ENCODE measurements at regions of chr4 and their contacts with region 1.

Region 1: GRCh38 chr4:101169044-101170014 is 178.0 kb downstream of the PPP3CA start:
- DNase-seq: peak; percentile 29
- H3K4me3 ChIP-seq: peak overlapping the region in 1 of 2 experiments; percentile 44; a peak in 1 of 4 replicates
- H3K27ac ChIP-seq: no peak overlapping the region
- H3K4me1 ChIP-seq: peaks cover 5 to 22% of the 10 kb centered on the region in 2 experiments; a peak in 3 of 4 replicates
- H3K27me3 ChIP-seq: no peaks in the 10 kb centered on the region
- CTCF ChIP-seq: peak; percentile 72
- EP300 ChIP-seq: no peak
- RAD21 ChIP-seq: peak; percentile 94

Region 2: DNA sequence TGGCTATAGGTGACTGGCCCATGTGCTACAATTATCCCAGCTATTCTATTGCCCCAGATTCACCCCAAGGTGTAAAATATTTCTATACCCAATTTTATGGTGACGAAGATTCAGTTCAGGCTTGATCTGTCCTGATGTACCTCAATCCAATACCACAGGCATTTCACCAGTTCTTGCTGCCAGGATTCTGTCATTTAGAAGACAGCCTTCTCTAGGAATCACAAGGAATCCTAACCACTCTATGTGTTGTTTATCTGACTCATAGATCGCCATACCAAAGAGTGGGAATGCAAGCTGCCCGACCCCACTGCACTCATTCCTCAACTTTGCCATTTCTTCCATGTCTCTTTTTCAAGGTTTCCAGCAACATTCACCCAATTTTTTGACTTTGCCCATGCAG is 296.5 kb before region 1 on chr4:
- CTCF ChIA-PET with region 1: no interaction called
- POLR2A ChIA-PET with region 1: no interaction called
- DNase-seq: no peak
- H3K4me3 ChIP-seq: no peak overlapping the region
- H3K27ac ChIP-seq: no peak overlapping the region
- H3K4me1 ChIP-seq: no peaks in the 10 kb centered on the region; a peak in 1 of 4 replicates
- H3K27me3 ChIP-seq: no peaks in the 10 kb centered on the region
- CTCF ChIP-seq: no peak
- EP300 ChIP-seq: no peak
- RAD21 ChIP-seq: no peak

Region 3: GRCh38 chr4:101037938-101038413 is 131.4 kb before region 1 on chr4:
- CTCF ChIA-PET with region 1: no interaction called
- POLR2A ChIA-PET with region 1: no interaction called
- DNase-seq: no peak
- H3K4me3 ChIP-seq: no peak overlapping the region
- H3K27ac ChIP-seq: no peak overlapping the region; a peak in 1 of 4 replicates
- H3K4me1 ChIP-seq: peaks cover 0 to 5% of the 10 kb centered on the region in 2 experiments; a peak in 2 of 4 replicates
- H3K27me3 ChIP-seq: no peaks in the 10 kb centered on the region
- CTCF ChIP-seq: no peak
- EP300 ChIP-seq: no peak
- RAD21 ChIP-seq: no peak

Region 4: GRCh38 chr4:101730291-101731117 is 561.2 kb after region 1 on chr4:
- CTCF ChIA-PET with region 1: interaction called, 25 read pairs
- POLR2A ChIA-PET with region 1: no interaction called
- DNase-seq: peak; percentile 50
- H3K4me3 ChIP-seq: no peak overlapping the region; a peak in 1 of 4 replicates
- H3K27ac ChIP-seq: no peak overlapping the region
- H3K4me1 ChIP-seq: no peaks in the 10 kb centered on the region
- H3K27me3 ChIP-seq: no peaks in the 10 kb centered on the region
- CTCF ChIP-seq: peak; percentile 70
- EP300 ChIP-seq: no peak
- RAD21 ChIP-seq: peak; percentile 86

Region 5: GRCh38 chr4:102259702-102260101 is 1090.4 kb after region 1 on chr4:
- CTCF ChIA-PET with region 1: interaction called, 13 read pairs
- POLR2A ChIA-PET with region 1: no interaction called
- DNase-seq: no peak
- H3K4me3 ChIP-seq: no peak overlapping the region
- H3K27ac ChIP-seq: no peak overlapping the region
- H3K4me1 ChIP-seq: no peaks in the 10 kb centered on the region; a peak in 2 of 4 replicates
- H3K27me3 ChIP-seq: no peaks in the 10 kb centered on the region
- CTCF ChIP-seq: no peak
- EP300 ChIP-seq: no peak
- RAD21 ChIP-seq: no peak

Measured in SK-N-SH (cell line).